BJ (cell line): ENCODE measurements at regions of chr17 and their contacts with region 1.

Region 1: DNA sequence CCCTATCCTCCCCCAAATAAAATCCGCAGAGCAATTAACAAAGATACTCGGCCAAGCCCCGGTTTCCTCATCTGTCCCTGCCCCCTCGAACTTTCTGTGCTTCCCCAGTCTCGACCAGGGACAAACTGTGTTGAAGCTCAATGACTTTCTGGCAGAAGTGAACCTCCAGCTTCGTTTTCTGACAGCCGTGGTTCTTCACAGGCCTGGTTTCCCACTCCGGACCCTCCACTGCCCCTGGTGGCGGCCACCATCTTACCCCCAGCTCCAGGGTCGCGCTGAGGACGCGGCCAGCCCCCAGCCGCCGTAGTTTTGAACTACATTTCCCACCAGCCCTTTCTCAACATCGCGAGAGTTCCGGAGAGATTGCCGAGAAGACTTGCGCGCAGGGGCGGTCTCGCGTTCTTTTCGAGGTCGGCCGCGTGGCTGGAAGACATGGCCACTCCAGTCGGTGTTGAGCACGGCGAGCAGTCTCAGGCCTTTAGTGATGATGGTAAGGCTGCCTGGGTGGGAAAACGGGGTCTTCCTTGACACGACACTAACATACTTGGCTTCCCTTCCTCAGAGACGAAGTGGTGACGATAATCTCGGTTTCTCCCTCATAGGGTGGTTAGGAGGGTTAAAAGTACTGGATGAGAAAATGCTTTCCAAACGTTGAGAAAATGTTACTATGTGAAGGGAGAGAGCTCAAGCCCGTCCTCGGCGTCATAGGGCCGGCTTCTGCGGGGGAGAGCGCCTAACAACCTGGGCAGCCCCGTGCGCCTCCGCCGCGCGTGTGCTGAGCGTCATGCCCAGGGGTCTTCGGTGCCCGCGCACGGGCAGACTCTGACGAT is 17.7 kb downstream of the PRCD start:
- DNase-seq: peak; percentile 70
- H3K4me3 ChIP-seq: peak overlapping the region; percentile 92
- H3K27me3 ChIP-seq: no peaks in the 10 kb centered on the region
- CTCF ChIP-seq: peak; percentile 74

Region 2: DNA sequence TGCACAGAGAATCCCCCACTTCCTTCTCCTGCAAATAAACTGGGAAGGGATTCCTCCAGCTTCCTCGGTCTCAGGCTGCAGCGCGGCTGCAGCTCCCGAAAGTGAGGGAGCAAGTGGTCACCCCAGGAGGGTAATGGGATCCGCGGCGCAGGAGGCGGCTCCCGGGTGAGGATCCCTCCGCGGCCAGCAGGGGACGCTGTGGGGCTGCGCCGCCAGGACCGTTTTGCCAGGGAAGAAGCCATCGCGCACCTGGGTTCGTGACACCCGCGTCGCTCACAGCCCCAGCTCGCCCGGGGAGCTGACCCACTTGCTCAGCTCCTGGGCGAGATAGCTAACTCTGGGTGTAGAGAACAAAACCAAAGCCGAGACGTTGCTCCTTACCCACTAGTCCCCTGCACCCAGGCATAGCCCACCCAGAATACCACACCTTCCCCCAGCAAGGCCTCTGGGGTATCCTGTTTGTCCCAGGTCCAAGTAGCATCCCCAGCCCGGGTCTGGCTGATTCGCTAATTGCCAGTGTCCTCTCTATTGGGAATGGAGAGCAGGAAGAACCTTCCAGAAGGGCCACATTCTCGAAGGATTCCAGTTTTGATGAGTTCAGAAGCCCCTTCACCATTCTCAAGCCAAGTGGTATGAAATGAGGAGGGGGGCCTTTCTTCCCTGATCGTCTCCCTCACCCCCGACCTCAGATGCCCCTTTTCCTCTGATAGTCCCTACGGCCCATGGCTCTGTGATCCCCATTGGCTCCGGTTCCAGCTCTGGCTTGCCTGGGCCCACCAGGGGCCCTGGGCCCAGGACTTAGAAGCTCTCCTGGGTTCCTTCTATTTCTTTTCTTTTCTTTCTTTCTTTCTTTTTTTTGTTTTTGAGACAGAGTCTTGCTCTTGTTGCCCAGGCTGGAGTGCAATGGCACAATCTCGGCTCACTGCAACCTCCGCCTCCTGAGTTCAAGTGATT is 34.2 kb before region 1 on chr17:
- CTCF ChIA-PET with region 1: interaction called, 60 read pairs
- POLR2A ChIA-PET with region 1: no interaction called
- DNase-seq: no peak
- H3K4me3 ChIP-seq: no peak overlapping the region
- H3K27me3 ChIP-seq: no peaks in the 10 kb centered on the region
- CTCF ChIP-seq: peak; percentile 100

Region 3: DNA sequence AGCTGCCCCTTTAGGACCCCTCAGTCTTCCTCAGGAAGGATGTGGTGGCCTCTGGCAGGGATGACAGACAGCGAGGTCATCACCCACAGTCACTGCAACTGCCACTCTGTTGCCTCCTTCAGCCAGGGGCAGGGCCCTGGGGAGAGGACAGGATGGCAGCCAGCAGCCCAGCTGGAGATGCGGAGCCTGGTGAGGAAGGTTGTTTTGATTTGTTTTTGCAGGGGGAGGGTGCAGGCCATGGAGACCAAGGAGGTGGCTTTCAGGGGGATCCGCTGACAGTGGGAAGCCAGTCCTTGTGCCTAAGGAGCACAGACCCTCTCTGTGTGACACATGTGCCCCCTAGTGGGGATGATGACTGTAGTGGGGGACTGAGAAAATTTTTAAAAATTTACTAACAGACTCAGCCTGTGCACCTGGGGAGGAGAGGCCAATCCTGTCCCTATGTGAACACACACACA is 10.4 kb before region 1 on chr17:
- CTCF ChIA-PET with region 1: interaction called, 39 read pairs
- POLR2A ChIA-PET with region 1: no interaction called
- DNase-seq: no peak
- H3K4me3 ChIP-seq: no peak overlapping the region
- H3K27me3 ChIP-seq: 0 out of 2 replicates have a peak, but pooled peaks cover 3% of the 10 kb centered on the region
- CTCF ChIP-seq: peak; percentile 80

Region 4: DNA sequence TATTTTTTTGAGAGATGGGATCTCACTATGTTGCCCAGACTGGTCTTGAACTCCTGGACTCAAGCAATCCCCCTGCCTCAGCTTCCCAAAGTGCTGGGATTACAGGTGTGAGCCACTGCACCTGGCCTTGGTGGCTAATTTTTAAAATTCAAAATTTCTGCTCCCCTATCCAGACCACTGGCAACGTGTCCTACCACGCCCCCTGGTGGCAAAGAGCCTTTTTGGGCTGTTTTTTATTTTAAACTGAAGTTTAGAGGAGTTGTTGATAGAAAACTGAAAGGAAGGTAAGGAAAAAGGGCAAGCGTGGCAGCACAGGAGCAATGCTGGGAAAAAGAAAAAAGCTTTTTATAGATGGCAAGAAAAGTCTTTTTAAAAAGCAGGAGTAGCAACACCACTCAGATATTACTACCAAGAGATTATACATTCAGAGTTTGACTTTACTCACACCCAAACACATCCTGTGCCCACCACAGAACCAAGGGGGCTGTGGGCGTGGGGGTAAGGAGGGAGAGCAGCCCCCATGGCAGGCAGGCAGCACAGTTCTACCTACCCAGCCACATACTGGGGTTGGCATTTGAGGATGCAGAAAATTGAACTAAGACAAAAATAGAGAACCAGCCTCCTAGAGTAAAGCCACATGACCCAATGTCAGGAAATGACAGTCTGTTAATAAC is 157.4 kb after region 1 on chr17:
- CTCF ChIA-PET with region 1: interaction called, 23 read pairs
- POLR2A ChIA-PET with region 1: no interaction called
- DNase-seq: no peak
- H3K4me3 ChIP-seq: no peak overlapping the region
- H3K27me3 ChIP-seq: no peaks in the 10 kb centered on the region
- CTCF ChIP-seq: peak; percentile 81